ENCODE measurements at regions of chr2 and their contacts with region 1.

Region 1: DNA sequence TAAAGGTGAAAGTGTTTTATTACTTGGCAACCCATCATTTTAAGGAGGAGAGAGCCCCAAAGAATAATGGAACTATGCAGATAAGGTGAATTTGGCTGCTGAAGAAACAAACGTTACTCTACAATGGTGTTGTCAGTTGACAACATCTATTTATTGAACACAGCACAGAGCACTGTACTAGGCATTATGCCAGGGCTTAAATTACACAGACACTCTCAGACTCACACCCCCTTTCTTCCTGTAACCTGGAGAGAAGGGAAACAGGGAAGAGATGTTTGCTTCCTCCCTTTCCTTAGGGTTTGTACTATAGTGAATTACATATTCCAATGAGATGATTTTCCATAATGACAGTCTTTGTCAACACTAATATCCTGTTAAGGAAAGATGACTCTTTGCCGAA is 94.0 kb upstream of the ATP5MC3 start:
- DNase-seq: no peak
- H3K4me3 Mint-ChIP-seq: no peak overlapping the region
- H3K27ac Mint-ChIP-seq: no peak overlapping the region
- H3K4me1 Mint-ChIP-seq: no peaks in the 10 kb centered on the region
- H3K27me3 Mint-ChIP-seq: peaks cover 86% of the 10 kb centered on the region
- CTCF ChIP-seq: no peak

Region 2: DNA sequence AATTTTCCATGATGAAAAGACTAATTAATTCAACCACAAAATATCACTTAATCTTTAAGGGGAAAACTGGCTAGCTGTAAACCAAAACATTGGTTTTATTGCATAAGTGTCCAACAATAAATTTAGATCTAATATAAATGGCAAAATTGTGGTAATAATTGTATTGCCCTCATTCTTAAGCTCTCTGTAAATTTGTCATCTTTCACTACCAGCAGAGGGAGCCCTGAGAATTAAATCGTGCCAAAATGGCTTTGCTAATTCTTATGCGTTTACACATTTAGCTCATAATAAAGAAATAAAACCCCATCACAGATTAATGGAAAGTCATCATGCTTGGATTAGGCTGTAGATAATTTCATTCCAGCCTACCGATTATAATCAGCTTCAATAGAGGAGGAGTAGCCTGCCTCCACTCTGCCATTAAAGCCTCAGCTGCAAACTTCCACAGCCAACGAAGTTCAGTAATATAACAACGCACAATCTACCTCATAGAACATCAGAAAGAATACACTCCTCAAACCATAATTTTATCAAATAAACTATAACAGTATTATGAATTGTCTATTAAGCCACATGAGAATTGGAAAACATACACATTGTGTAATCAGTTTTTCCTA is 24.0 kb before region 1 on chr2:
- CTCF ChIA-PET with region 1: interaction called, 64 read pairs
- POLR2A ChIA-PET with region 1: interaction called, 3 read pairs
- intact Hi-C with region 1: no loop called
- DNase-seq: peak; percentile 63
- H3K4me3 Mint-ChIP-seq: no peak overlapping the region
- H3K27ac Mint-ChIP-seq: no peak overlapping the region
- H3K4me1 Mint-ChIP-seq: no peaks in the 10 kb centered on the region
- H3K27me3 Mint-ChIP-seq: peaks cover 56% of the 10 kb centered on the region
- CTCF ChIP-seq: peak; percentile 48